K562 (cell line): ENCODE measurements at regions of chr6 and their contacts with region 1.

Region 1: DNA sequence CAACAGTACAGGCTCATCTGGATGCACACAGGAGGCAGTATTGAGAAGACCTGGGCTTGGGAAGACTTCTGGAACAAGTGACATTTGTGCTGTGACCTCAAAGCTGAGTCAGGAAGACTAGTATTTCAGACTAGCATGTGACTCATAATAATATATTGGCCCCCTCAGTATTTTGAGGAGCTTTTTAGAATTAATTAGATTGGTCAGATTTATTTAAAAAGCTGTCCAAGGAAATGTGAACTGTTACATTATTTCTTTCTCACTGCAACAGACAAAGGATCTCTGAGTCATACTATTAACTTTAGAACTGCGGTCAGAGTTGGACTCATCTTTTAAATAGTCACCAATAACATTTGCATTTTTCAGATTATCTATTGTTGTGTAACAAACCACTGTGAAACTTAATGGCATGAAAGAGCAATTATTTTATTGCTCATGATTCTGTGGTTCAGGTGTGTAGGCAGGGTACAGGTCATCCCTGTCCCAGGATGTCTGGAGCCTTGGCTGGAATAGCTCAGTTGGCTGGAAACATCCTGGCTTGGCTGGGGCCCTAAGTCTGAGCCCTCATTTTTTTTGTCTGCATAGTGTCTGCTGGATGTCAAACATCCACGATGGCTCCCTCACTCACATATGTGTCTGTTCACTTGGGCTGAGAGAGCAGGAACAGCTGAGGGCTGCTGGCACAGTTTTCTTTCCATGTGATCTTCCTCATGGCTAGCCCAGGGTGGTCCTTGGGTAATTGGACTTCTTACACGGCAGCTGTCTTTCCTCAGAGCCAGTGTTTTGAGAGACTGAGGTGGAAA is 46.9 kb downstream of the MAP3K4 start:
- DNase-seq: no peak
- ATAC-seq: 0 out of 3 replicates have a peak, but pooled peaks have one; percentile 16
- H3K4me3 ChIP-seq: no peak overlapping the region
- H3K27ac ChIP-seq: no peak overlapping the region
- H3K4me1 ChIP-seq: peaks cover 0 to 6% of the 10 kb centered on the region in 2 experiments; a peak in 3 of 5 replicates
- H3K27me3 ChIP-seq: no peaks in the 10 kb centered on the region
- CTCF ChIP-seq: no peak
- EP300 ChIP-seq: no peak
- POLR2A ChIP-seq: no peak
- RAD21 ChIP-seq: no peak

Region 2: DNA sequence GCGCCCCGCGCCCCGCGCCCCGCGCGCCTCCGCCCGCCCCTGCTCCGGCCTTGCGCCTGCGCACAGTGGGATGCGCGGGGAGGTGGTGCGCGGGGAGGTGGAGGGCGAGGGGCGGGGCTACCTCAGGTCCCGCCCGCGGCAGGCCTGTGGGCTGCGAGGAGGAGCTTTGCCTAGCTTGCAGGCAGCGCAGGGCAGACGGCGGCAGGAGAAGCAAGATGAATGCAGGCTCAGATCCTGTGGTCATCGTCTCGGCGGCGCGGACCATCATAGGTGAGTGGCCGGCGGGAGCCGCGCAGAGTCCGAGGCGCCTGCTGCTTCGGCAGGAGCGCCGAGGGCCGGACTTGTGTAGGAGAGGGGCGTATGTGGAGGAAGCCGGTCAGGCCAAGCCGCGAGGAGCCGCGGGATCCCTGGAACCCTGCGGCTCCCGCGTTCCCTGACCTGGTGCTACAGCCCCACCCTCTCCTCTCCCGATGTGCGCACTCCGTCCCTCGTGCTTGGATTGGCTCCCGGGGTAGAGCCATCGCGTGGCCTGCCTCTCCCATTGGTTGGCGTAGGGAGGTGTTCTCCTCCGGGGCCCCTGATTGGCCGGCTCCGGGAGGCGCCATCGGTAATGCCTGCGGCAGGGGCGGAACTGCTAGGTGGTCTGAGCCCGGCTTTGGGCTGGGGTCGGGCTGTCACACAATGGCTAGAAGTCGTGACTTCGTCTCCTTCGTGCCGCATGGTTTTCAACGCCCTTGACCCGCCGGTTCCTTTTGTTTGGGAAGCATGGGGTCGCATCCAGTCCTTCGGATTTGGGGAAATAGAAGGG is 1276.4 kb before region 1 on chr6 and contains the start of gene ACAT2:
- CTCF ChIA-PET with region 1: no interaction called
- POLR2A ChIA-PET with region 1: no interaction called
- in situ Hi-C with region 1: no loop called
- intact Hi-C with region 1: no loop called
- DNase-seq: peak; percentile 98 to 100 (median 99)
- ATAC-seq: peak; percentile 98
- H3K4me3 ChIP-seq: peak within 1 kb of the TSS; percentile 66
- H3K27ac ChIP-seq: peak within 1 kb of the TSS; percentile 87
- H3K4me1 ChIP-seq: peaks cover 16 to 26% of the 10 kb centered on the region in 2 experiments; a peak in 4 of 5 replicates
- H3K27me3 ChIP-seq: no peaks in the 10 kb centered on the region
- CTCF ChIP-seq: no peak
- EP300 ChIP-seq: 0 out of 2 replicates have a peak, but pooled peaks have one; percentile 1
- POLR2A ChIP-seq: peak; percentile 94
- RAD21 ChIP-seq: no peak
- polyA plus RNA-seq, gene ACAT2: 247 to 309 TPM

Region 3: GRCh38 chr6:160520043-160520904 is 518.2 kb before region 1 on chr6:
- CTCF ChIA-PET with region 1: no interaction called
- POLR2A ChIA-PET with region 1: no interaction called
- in situ Hi-C with region 1: no loop called
- intact Hi-C with region 1: no loop called
- DNase-seq: peak; percentile 84 to 86 (median 85)
- ATAC-seq: peak; percentile 94
- H3K4me3 ChIP-seq: peak overlapping the region; percentile 54
- H3K27ac ChIP-seq: peak overlapping the region; percentile 43; the same call in 2 of the 3 replicates
- H3K4me1 ChIP-seq: peaks cover 3 to 9% of the 10 kb centered on the region in 2 experiments; a peak in 3 of 5 replicates
- H3K27me3 ChIP-seq: no peaks in the 10 kb centered on the region
- CTCF ChIP-seq: peak; percentile 4 to 58 (median 32); a peak in 5 of 6 replicates
- EP300 ChIP-seq: no peak; the same call in 1 of the 2 replicates
- POLR2A ChIP-seq: peak; percentile 65; the same call in 1 of the 2 replicates
- RAD21 ChIP-seq: peak; percentile 85 to 90

Region 4: DNA sequence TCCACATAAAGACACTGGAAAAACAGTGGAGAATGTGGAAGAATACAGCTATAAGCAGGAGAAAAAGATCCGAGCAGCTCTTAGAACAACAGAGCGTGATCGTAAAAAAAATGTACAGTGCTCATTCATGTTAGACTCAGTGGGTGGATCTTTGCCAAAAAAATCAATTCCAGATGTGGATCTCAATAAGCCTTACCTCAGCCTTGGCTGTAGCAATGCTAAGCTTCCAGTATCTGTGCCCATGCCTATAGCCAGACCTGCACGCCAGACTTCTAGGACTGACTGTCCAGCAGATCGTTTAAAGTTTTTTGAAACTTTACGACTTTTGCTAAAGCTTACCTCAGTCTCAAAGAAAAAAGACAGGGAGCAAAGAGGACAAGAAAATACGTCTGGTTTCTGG is 10.2 kb after region 1 on chr6:
- CTCF ChIA-PET with region 1: no interaction called
- POLR2A ChIA-PET with region 1: interaction called, 15 read pairs
- in situ Hi-C with region 1: no loop called
- intact Hi-C with region 1: no loop called
- DNase-seq: no peak
- ATAC-seq: no peak
- H3K4me3 ChIP-seq: no peak overlapping the region
- H3K27ac ChIP-seq: no peak overlapping the region
- H3K4me1 ChIP-seq: 0 out of 5 replicates have a peak, but pooled peaks cover 0 to 2% of the 10 kb centered on the region in 2 experiments
- H3K27me3 ChIP-seq: no peaks in the 10 kb centered on the region
- CTCF ChIP-seq: no peak
- EP300 ChIP-seq: no peak
- POLR2A ChIP-seq: no peak
- RAD21 ChIP-seq: no peak

Region 5: GRCh38 chr6:161711515-161711914 is 673.1 kb after region 1 on chr6:
- CTCF ChIA-PET with region 1: no interaction called
- POLR2A ChIA-PET with region 1: no interaction called
- in situ Hi-C with region 1: no loop called
- intact Hi-C with region 1: no loop called
- DNase-seq: no peak
- ATAC-seq: no peak
- H3K4me3 ChIP-seq: no peak overlapping the region
- H3K27ac ChIP-seq: no peak overlapping the region
- H3K4me1 ChIP-seq: no peaks in the 10 kb centered on the region
- H3K27me3 ChIP-seq: peaks cover 2 to 6% of the 10 kb centered on the region in 2 experiments; a peak in 3 of 5 replicates
- CTCF ChIP-seq: no peak
- EP300 ChIP-seq: no peak
- POLR2A ChIP-seq: no peak
- RAD21 ChIP-seq: no peak